Activated CD4-positive, alpha-beta memory T cell treated with anti-CD3 and anti-CD28 coated beads for 36 hours (primary cell): ENCODE measurements at regions of chr1 and their contacts with region 1.

Region 1: DNA sequence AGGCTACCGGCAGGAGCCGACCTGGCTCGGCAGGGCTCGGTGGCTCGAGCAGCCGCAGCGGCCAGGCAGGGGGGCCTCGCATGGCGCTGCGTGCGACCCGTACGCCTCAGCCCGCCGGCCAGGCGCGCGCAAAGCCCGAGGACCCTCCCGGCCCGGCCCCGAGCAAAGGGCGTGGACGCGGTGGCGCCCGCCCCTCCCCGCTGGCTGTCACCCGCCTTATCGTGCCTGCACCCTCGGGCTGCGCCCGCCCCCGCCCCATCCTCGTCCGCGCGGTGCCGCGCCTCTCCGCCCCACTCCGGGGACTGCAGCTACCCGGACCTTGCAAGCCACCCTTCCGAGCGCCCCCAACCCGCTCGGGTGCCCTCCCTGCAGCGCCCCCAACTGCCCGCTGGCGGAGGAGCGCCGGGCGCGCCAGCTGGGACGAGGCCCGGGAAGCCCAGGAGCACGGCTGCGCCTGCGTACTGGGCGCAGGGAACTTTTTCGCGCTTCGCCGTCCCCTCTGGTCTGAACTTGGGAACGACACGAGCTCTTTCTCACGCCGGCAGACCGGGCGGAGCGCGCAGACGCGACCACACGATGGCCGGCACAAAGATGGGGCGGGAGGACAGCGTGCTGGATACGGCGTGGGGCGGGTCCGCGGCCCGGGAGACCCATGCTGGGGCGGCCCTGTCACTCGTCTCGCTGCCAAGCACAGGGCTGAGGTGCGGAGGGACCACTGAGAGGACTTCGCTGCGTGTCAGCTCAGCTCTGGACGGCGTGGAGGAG is at the start of gene ABCB10:
- DNase-seq: peak; percentile 95
- H3K4me3 Mint-ChIP-seq: peak within 1 kb of the TSS; percentile 91
- H3K27ac Mint-ChIP-seq: peak within 1 kb of the TSS; percentile 87
- H3K4me1 Mint-ChIP-seq: peaks cover 37% of the 10 kb centered on the region
- H3K27me3 Mint-ChIP-seq: no peaks in the 10 kb centered on the region
- total RNA-seq, gene ABCB10: 30.8 to 31.0 TPM

Region 2: DNA sequence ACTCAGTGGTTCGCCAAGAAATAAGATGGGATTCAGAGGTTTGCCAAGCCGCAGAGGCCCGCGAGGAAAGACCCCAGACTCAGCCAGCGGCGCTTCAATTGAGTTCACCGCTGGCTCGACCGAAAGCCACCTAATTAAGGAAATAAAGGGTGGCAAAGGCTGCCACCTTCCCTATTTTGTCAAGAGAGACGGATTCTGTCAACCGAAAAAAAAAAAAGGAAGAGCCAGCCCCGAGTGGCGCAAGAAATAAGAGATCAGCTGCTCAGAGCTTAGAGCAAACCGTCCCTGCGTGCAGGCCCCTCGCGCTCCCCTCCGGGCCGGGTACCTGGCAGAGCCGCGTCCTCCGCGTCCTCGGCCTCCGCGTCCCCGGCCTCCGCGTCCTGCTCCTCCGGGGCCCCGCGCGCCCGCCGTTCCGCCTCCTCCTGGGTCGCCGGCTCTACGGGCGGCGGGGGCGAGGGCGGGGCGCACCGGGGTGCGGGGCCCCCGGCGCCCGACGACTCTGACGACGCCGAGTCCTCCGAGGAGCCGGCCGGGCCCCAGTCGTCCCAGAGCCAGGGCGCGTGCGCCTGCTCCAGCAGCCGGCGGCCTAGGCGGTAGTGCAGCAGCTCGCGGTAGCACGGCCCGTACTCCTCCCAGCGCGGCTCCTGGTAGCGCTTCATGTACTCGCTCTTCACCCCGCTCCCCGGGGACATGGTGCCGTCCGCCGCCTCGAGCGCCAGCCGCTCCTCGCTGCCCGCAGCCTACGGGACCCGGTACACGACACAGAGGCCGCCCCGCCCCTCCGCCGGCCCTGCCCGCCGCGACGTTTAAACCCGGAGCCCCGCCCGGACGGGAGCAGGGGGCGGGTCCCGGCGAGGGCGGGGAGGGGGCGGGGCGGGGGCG is 216.7 kb before region 1 on chr1:
- CTCF ChIA-PET with region 1: interaction called, 3 read pairs
- POLR2A ChIA-PET with region 1: no interaction called
- intact Hi-C with region 1: loop called (anchors 5 kb)
- DNase-seq: peak; percentile 83
- H3K4me3 Mint-ChIP-seq: peak overlapping the region; percentile 81
- H3K27ac Mint-ChIP-seq: peak overlapping the region; percentile 70
- H3K4me1 Mint-ChIP-seq: peaks cover 54% of the 10 kb centered on the region
- H3K27me3 Mint-ChIP-seq: peaks cover 7% of the 10 kb centered on the region

Region 3: GRCh38 chr1:229507951-229508822 is 50.6 kb before region 1 on chr1 and contains the start of gene NUP133:
- CTCF ChIA-PET with region 1: interaction called, 16 read pairs
- POLR2A ChIA-PET with region 1: interaction called, 17 read pairs
- intact Hi-C with region 1: loop called (anchors 1 kb)
- DNase-seq: peak; percentile 99
- H3K4me3 Mint-ChIP-seq: peak within 1 kb of the TSS; percentile 93
- H3K27ac Mint-ChIP-seq: peak within 1 kb of the TSS; percentile 83
- H3K4me1 Mint-ChIP-seq: peaks cover 26% of the 10 kb centered on the region
- H3K27me3 Mint-ChIP-seq: peaks cover 2% of the 10 kb centered on the region
- total RNA-seq, gene NUP133: 54.1 to 57.0 TPM

Region 4: DNA sequence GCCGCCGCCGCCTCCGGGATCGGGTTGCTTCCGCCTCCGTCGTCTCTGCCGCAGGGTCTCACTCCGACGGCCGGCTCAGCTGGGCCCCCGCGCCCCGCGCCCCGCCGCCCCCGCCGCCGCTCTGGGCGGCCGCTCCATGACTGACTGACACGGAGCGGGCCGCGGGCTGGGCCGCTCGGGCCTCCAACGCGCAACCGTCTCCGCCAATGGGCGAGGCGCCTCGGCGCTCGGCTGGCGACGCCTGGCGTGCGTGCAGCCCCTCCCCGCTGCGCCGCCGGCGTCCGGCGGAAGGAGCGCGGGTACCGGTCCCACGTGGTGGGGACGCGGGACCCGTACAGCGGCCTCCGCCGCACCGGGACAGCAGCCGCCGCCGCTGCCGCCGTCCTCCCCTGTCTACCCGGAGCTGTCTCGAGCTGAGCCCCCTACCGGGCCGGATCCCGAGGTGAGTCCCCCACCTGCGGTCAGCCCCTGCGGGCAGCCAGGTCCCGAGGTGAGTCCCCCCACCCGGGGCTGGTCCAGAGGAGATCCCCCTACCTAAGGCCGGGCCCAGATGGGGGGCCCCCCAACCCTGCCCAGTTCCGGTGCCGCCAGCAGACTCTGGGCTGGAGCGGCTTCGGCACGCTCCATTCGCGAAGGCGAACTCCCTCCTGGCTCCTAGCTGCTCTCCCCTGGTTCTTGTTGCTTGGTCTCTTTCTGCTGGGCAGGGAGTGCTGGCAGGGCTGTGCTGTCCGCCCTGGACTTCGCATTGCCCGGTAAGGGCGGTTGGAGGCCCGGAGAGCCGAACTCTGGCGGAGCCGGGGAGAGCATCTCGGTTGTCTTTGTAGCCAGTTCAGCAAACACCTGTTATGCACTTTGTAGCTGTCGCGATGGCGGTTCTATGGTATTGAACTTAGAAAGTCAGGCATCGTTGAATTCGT is 67.4 kb after region 1 on chr1 and contains the starts of genes TAF5L and URB2:
- CTCF ChIA-PET with region 1: interaction called, 14 read pairs
- POLR2A ChIA-PET with region 1: interaction called, 7 read pairs
- intact Hi-C with region 1: loop called (anchors 1 kb)
- DNase-seq: peak; percentile 91
- H3K4me3 Mint-ChIP-seq: peak within 1 kb of the TSS; percentile 99
- H3K27ac Mint-ChIP-seq: peak within 1 kb of the TSS; percentile 89
- H3K4me1 Mint-ChIP-seq: peaks cover 65% of the 10 kb centered on the region
- H3K27me3 Mint-ChIP-seq: no peaks in the 10 kb centered on the region
- total RNA-seq, gene TAF5L: 14.1 to 17.8 TPM
- total RNA-seq, gene URB2: 13.8 to 14.6 TPM

Region 5: GRCh38 chr1:230303822-230304221 is 745.1 kb after region 1 on chr1:
- CTCF ChIA-PET with region 1: no interaction called
- POLR2A ChIA-PET with region 1: no interaction called
- intact Hi-C with region 1: loop called (anchors 2 kb)
- DNase-seq: no peak
- H3K4me3 Mint-ChIP-seq: no peak overlapping the region
- H3K27ac Mint-ChIP-seq: no peak overlapping the region
- H3K4me1 Mint-ChIP-seq: peaks cover 25% of the 10 kb centered on the region
- H3K27me3 Mint-ChIP-seq: peaks cover 2% of the 10 kb centered on the region